ENCODE measurements at regions of chr7 and their contacts with region 1.

Region 1: DNA sequence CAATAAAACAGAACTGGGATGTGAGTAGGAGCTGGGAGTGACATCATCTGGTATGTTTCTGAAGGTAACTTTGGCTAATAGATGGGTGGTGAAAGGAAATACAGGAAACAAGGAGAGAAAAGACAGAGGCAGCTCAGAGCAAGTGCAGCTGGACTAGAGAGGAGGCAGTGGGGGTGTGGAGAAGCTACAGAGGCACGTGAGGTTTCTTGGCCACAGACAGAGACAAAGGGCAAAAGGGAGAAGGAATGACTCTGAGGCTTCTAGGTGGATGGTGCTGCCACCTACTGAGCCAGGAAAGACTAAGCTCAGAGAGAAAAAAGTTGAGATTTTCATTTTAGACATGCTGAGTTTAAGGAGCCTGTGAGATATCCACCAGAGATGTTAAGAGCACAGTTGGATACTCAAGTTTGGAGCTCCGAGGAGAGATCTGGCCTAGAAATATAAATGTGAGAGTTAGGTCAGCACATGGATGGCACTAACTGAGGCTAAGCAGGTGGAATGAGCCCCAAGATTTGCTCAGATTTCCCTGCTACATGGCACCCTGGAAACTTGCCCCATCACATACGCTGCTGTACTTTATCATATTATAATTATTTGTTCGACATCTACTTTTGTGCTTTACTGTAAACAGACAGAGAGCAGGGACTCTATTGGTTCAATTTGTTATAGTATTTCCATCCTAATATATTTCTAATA is 293.0 kb upstream of the IMMP2L start:
- DNase-seq: no peak
- H3K4me3 Mint-ChIP-seq: no peak overlapping the region
- H3K27ac Mint-ChIP-seq: no peak overlapping the region
- H3K4me1 Mint-ChIP-seq: peaks cover 5% of the 10 kb centered on the region
- H3K27me3 Mint-ChIP-seq: peaks cover 8% of the 10 kb centered on the region

Region 2: DNA sequence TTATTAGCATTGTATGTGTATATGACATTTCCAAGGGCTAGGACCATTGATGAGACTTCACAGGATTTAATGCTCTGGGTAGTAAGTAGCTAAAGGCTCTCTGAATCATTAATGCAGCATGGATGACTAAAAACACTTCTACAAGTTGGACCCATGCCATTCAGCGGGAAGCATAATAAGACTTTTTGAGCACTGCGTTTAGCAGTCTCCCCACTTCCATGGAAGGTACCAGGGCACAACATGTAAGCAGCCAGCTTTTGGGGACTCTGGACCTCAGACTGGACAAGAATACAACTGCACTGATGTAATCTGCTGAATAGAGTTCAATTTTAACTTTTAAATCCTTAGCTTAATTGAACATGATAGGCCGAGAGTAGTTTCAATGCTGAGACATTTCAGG is 101.3 kb before region 1 on chr7:
- CTCF ChIA-PET with region 1: interaction called, 14 read pairs
- DNase-seq: no peak
- H3K4me3 Mint-ChIP-seq: no peak overlapping the region
- H3K27ac Mint-ChIP-seq: no peak overlapping the region
- H3K4me1 Mint-ChIP-seq: no peaks in the 10 kb centered on the region
- H3K27me3 Mint-ChIP-seq: peaks cover 8% of the 10 kb centered on the region

Region 3: DNA sequence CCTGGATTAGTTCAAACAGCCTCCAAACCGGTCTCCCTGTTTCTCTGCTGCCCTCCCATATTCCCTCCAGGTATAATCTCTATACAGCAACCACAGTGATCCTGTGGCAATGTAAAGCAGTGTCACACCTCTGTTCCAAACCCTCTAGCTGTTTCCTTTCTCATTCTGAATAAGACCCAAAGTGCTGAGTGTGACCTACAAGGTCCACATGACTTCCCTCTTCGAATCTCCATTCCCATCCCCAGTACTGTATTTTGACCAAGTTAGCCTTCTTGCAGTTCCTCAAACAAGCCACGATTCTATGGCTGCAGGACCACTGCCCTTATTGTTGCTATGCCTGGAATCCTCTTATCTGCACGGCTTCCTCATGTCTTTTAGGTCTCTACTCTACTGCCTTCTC is 59.0 kb after region 1 on chr7:
- CTCF ChIA-PET with region 1: no interaction called
- DNase-seq: no peak
- H3K4me3 Mint-ChIP-seq: no peak overlapping the region
- H3K27ac Mint-ChIP-seq: no peak overlapping the region
- H3K4me1 Mint-ChIP-seq: no peaks in the 10 kb centered on the region
- H3K27me3 Mint-ChIP-seq: no peaks in the 10 kb centered on the region

Measured in activated naive CD4-positive, alpha-beta T cell treated with anti-CD3 and anti-CD28 coated beads, Interleukin-2, amount 10 ng/mL, durations not matched to agents 7 days and 5 days (primary cell).